ENCODE measurements at regions of chr1 and their contacts with region 1.

Region 1: GRCh38 chr1:40153073-40153770 is 8.0 kb upstream of the RLF start:
- DNase-seq: no peak
- ATAC-seq: no peak

Region 2: DNA sequence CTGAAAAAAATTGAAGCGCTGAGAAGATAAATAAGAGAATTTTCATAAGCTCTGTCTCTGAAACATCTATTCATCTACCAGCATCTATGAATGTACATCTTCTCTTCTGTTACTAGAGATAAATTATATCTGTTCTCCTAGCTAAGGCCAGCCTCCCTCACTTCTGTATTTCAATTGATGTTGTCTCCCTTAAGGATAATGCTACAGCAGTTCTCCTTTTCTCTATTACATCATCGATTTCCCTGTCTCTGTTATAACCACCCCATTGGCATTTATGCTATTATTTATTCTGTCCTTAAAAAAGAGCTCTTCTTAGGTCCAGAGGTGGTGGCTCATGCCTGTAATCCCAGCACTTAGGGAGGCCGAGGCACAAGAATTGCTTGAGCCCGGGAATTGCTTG is 51.6 kb after region 1 on chr1:
- intact Hi-C with region 1: no loop called
- DNase-seq: no peak
- ATAC-seq: no peak

Region 3: DNA sequence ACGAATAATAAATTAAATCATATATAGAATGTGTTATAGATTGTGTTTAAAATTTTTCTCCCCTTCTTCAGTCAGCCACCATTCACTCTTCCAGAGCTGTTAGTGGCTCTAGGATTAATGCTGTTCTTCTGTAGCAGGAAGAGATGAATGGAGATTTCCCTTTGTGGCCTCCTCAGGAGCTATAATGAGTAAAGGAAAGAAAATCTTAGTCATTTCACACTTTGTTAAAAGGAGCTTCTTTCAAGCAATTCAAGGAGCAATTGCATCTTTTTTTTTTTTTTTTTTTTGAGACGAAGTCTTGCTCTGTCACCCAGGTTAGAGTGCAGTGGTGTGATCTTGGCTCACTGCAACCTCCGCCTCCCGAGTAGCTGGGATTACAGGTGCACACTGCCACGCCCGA is 70.8 kb after region 1 on chr1:
- intact Hi-C with region 1: no loop called
- DNase-seq: no peak
- ATAC-seq: no peak

Region 4: GRCh38 chr1:40338745-40339424 is 185.7 kb after region 1 on chr1:
- intact Hi-C with region 1: loop called (anchors 5 kb)
- DNase-seq: peak; percentile 87
- ATAC-seq: peak; percentile 87